Naive thymus-derived CD4-positive, alpha-beta T cell (primary cell): ENCODE measurements at regions of chr11 and their contacts with region 1.

Region 1: DNA sequence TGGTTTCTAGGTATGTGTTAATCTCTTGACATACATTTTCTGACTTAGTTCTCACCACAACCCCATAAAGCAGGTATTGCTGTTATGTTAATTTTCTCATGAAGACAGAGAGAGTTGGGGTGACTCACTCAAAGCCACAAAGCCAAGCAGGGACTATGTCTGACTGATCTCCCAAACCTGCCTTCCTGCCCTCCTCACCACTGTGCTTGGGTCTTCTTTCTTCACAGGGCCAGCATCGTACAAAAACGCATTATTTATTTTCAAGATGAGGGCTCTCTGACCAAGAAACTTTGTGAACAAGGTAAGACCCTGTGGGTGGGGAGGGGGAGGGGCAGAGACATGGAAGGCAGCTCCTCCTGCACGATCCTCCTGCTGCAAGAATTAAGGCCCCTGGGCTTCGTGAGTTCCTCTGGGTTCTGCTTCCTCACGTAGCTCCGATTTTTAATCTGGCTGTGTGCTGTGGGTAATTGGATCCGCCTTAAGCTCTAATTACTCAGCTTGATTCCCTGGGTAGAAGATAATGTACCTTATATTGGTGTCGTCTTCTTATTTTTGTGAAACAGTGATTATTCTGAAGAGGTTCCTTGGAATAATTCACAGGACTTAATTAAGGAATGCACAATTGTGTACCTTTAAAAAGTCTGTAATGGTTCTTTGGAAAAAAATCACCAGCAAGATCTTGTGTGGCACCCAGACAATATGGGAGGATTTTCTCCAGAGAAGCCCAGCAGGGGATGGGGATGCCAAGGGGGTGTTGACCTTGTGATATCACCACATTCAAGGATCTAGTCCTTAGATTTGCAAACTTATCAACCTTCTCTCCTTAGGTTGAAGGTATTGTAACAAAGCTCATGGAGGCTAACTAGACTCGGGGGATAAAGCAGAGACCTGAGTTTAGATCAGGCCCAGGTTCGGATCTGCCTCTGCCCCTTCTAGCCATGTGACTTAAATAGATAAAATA is 112.9 kb downstream of the SPON1 start:
- DNase-seq: peak; percentile 8 to 79 (median 67)
- ATAC-seq: peak; percentile 94
- H3K4me3 ChIP-seq: peak overlapping the region; percentile 39
- H3K4me3 Mint-ChIP-seq: peak overlapping the region; percentile 49 to 90 (median 74)
- H3K27ac ChIP-seq: peak overlapping the region; percentile 11
- H3K27ac Mint-ChIP-seq: peak overlapping the region; percentile 56 to 94 (median 88)
- H3K4me1 ChIP-seq: peaks cover 0 to 63% of the 10 kb centered on the region in 2 donors
- H3K4me1 Mint-ChIP-seq: peaks cover 43 to 74% (median 67%) of the 10 kb centered on the region in 7 donors
- H3K27me3 ChIP-seq: no peaks in the 10 kb centered on the region
- H3K27me3 Mint-ChIP-seq: peaks cover 0 to 21% (median 0%) of the 10 kb centered on the region in 5 donors

Region 2: GRCh38 chr11:13772223-13773046 is 303.0 kb before region 1 on chr11:
- CTCF ChIA-PET with region 1: interaction called, 3 read pairs
- POLR2A ChIA-PET with region 1: no interaction called
- intact Hi-C with region 1: loop called in 1 of 2 experiments (anchors 2 kb)
- DNase-seq: peak in 7 of 9 donors; percentile 61 to 80 (median 75)
- ATAC-seq: peak; percentile 79
- H3K4me3 ChIP-seq: no peak overlapping the region
- H3K4me3 Mint-ChIP-seq: no peak overlapping the region
- H3K27ac ChIP-seq: no peak overlapping the region
- H3K27ac Mint-ChIP-seq: no peak overlapping the region
- H3K4me1 ChIP-seq: no peaks in the 10 kb centered on the region
- H3K4me1 Mint-ChIP-seq: peaks cover 0 to 9% (median 5%) of the 10 kb centered on the region in 7 donors
- H3K27me3 ChIP-seq: no peaks in the 10 kb centered on the region
- H3K27me3 Mint-ChIP-seq: peaks cover 0 to 44% (median 4%) of the 10 kb centered on the region in 5 donors

Region 3: DNA sequence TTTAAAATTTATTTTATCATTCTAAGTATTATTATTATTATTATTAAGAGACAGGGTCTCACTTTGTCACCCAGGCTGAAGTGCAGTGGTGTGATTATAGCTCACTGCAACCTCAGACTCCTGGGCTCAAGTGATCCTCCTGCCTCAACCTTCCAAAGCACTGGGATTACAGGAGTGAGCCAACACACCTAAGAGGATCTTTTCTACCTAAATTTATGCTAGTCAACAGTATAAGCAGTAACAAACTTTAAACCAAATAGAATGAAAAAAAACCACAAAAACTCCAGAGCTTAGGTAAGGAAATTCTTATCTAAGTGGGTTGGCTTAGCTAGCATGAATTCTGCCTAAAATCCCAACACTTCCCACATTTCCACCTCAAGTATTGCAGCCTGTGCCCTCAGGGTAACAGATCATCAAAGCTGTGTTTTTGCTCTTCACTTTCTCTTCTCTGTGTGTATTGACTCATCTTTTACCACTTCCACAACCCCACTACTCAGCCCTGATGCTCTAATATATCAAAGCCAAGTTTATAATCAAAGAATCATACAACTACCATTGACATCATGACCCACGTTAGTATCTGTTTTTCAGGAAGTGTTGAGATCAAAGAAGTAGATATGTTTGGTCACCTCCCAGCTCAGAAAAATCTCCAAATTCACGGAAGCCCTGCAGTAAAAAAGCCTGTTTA is 206.5 kb before region 1 on chr11:
- CTCF ChIA-PET with region 1: no interaction called
- POLR2A ChIA-PET with region 1: interaction called, 3 read pairs
- intact Hi-C with region 1: loop called (anchors 1 to 5 kb)
- DNase-seq: peak in 7 of 9 donors; percentile 73 to 92 (median 88)
- ATAC-seq: peak; percentile 96
- H3K4me3 ChIP-seq: no peak overlapping the region
- H3K4me3 Mint-ChIP-seq: peak overlapping the region in 9 of 10 donors; percentile 2 to 70 (median 40)
- H3K27ac ChIP-seq: peak overlapping the region; percentile 87
- H3K27ac Mint-ChIP-seq: peak overlapping the region; percentile 86 to 97 (median 92)
- H3K4me1 ChIP-seq: peaks cover 9 to 19% of the 10 kb centered on the region in 2 donors
- H3K4me1 Mint-ChIP-seq: peaks cover 19 to 56% (median 43%) of the 10 kb centered on the region in 7 donors
- H3K27me3 ChIP-seq: no peaks in the 10 kb centered on the region
- H3K27me3 Mint-ChIP-seq: peaks cover 0 to 14% (median 0%) of the 10 kb centered on the region in 5 donors

Region 4: GRCh38 chr11:13962562-13963168 is 112.7 kb before region 1 on chr11 and contains the start of gene SPON1:
- CTCF ChIA-PET with region 1: interaction called, 4 read pairs
- POLR2A ChIA-PET with region 1: interaction called, 4 read pairs
- intact Hi-C with region 1: loop called (anchors 1 to 5 kb)
- DNase-seq: peak in 7 of 9 donors; percentile 34 to 57 (median 42)
- ATAC-seq: peak; percentile 81
- H3K4me3 ChIP-seq: peak within 1 kb of the TSS; percentile 34
- H3K4me3 Mint-ChIP-seq: peak within 1 kb of the TSS; percentile 68 to 86 (median 77)
- H3K27ac ChIP-seq: no peak within 1 kb of the TSS
- H3K27ac Mint-ChIP-seq: peak within 1 kb of the TSS in 1 of 9 donors; percentile 55
- H3K4me1 ChIP-seq: peaks cover 10 to 16% of the 10 kb centered on the region in 2 donors
- H3K4me1 Mint-ChIP-seq: peaks cover 4 to 18% (median 13%) of the 10 kb centered on the region in 7 donors
- H3K27me3 ChIP-seq: peaks cover 6 to 21% of the 10 kb centered on the region in 2 donors
- H3K27me3 Mint-ChIP-seq: peaks cover 55 to 88% (median 62%) of the 10 kb centered on the region in 5 donors
- total RNA-seq, gene SPON1: 1.6 to 20.8 (median 3.9) TPM

Region 5: DNA sequence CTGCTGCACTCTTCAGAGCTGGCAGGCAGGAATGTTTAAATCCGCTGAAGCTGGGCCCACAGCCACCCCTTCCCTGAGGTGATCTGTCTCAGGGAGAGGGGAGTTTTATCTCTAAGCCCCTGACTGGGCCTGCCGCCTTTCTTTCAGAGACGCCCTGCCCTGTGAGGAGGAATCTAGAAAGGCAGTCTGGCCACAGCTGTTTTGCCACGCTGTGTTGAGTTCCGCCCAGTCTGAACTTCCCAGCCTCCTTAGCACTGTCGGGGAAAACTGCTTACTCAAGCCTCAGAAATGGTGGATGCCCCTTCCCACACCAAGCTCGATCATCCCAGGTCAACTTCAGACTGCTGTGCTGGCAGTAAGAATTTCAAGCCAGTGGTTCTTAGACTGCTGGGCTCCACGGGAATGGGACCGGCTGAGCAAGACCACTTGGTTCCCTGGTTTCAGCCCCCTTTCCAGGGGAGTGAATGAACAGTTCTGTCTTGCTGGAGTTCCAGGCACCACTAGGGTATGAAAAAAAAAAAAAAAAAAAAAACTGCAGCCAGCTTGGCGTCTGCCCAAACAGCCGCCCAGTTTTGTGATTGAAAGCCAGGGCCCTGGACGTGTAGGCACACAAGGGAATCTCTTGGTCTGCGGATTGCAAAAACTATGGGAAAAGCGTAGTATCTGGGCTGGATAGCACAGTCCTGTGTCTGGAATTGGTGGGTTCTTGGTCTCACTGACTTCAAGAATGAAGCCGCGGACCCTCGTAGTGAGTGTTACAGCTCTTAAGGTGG is 14.5 kb after region 1 on chr11:
- CTCF ChIA-PET with region 1: no interaction called
- POLR2A ChIA-PET with region 1: interaction called, 6 read pairs
- intact Hi-C with region 1: loop called in 1 of 2 experiments (anchors 2 kb)
- DNase-seq: no peak
- ATAC-seq: no peak
- H3K4me3 ChIP-seq: no peak overlapping the region
- H3K4me3 Mint-ChIP-seq: peak overlapping the region in 8 of 10 donors; percentile 7 to 79 (median 74)
- H3K27ac ChIP-seq: no peak overlapping the region
- H3K27ac Mint-ChIP-seq: peak overlapping the region in 7 of 9 donors; percentile 26 to 90 (median 53)
- H3K4me1 ChIP-seq: peaks cover 0 to 10% of the 10 kb centered on the region in 2 donors
- H3K4me1 Mint-ChIP-seq: peaks cover 8 to 43% (median 19%) of the 10 kb centered on the region in 7 donors
- H3K27me3 ChIP-seq: no peaks in the 10 kb centered on the region
- H3K27me3 Mint-ChIP-seq: peaks cover 0 to 42% (median 0%) of the 10 kb centered on the region in 5 donors

Region 6: GRCh38 chr11:14249121-14249963 is 173.9 kb after region 1 on chr11:
- CTCF ChIA-PET with region 1: no interaction called
- POLR2A ChIA-PET with region 1: no interaction called
- intact Hi-C with region 1: loop called in 1 of 2 experiments (anchors 5 kb)
- DNase-seq: peak; percentile 42 to 77 (median 62)
- ATAC-seq: peak; percentile 75
- H3K4me3 ChIP-seq: peak overlapping the region; percentile 31
- H3K4me3 Mint-ChIP-seq: peak overlapping the region; percentile 46 to 77 (median 72)
- H3K27ac ChIP-seq: no peak overlapping the region
- H3K27ac Mint-ChIP-seq: peak overlapping the region in 2 of 9 donors; percentile 71 to 80
- H3K4me1 ChIP-seq: peaks cover 12 to 13% of the 10 kb centered on the region in 2 donors
- H3K4me1 Mint-ChIP-seq: peaks cover 13 to 28% (median 24%) of the 10 kb centered on the region in 7 donors
- H3K27me3 ChIP-seq: no peaks in the 10 kb centered on the region
- H3K27me3 Mint-ChIP-seq: peaks cover 0 to 22% (median 0%) of the 10 kb centered on the region in 5 donors

Region 7: DNA sequence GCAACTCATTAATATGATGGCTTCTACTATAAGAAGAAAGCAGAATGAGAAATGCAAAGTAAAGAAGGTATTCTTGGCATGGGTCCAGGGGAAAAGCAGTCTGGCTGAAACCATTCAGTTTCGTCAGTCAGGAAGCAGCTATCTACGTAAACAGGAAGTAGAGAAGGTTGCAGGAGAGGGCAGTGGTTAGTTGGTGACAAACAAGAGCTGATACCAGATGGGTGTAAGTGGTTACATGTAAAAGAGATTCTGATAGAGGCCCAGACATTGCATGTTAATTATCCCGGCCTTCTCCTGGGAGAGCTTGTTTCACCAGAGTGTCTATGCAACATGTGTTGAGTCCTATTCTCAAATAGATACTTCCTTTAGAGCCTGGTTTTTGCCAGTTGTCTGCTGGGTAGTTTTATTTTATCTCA is 503.2 kb after region 1 on chr11:
- CTCF ChIA-PET with region 1: no interaction called
- POLR2A ChIA-PET with region 1: no interaction called
- intact Hi-C with region 1: no loop called
- DNase-seq: peak in 8 of 9 donors; percentile 57 to 95 (median 92)
- ATAC-seq: peak; percentile 99
- H3K4me3 ChIP-seq: peak overlapping the region; percentile 22
- H3K4me3 Mint-ChIP-seq: peak overlapping the region; percentile 40 to 85 (median 62)
- H3K27ac ChIP-seq: peak overlapping the region; percentile 79
- H3K27ac Mint-ChIP-seq: peak overlapping the region; percentile 92 to 96 (median 95)
- H3K4me1 ChIP-seq: peaks cover 39 to 41% of the 10 kb centered on the region in 2 donors
- H3K4me1 Mint-ChIP-seq: peaks cover 46 to 71% (median 63%) of the 10 kb centered on the region in 7 donors
- H3K27me3 ChIP-seq: no peaks in the 10 kb centered on the region
- H3K27me3 Mint-ChIP-seq: no peaks in the 10 kb centered on the region